Activated CD4-positive, alpha-beta memory T cell treated with anti-CD3 and anti-CD28 coated beads, Interleukin-2, amount 10 ng/mL, durations not matched to agents 7 days and 5 days (primary cell): ENCODE measurements at regions of chr10 and their contacts with region 1.

Region 1: GRCh38 chr10:104260775-104261115 is 6.1 kb downstream of the GSTO1 start:
- DNase-seq: no peak
- H3K4me3 Mint-ChIP-seq: peak overlapping the region; percentile 1
- H3K27ac Mint-ChIP-seq: peak overlapping the region; percentile 74
- H3K4me1 Mint-ChIP-seq: peaks cover 76% of the 10 kb centered on the region
- H3K27me3 Mint-ChIP-seq: no peaks in the 10 kb centered on the region

Region 2: GRCh38 chr10:104246976-104247375 is 13.8 kb before region 1 on chr10:
- CTCF ChIA-PET with region 1: no interaction called
- POLR2A ChIA-PET with region 1: interaction called, 11 read pairs
- DNase-seq: peak; percentile 32
- H3K4me3 Mint-ChIP-seq: peak overlapping the region; percentile 25
- H3K27ac Mint-ChIP-seq: peak overlapping the region; percentile 82
- H3K4me1 Mint-ChIP-seq: peaks cover 26% of the 10 kb centered on the region
- H3K27me3 Mint-ChIP-seq: peaks cover 29% of the 10 kb centered on the region

Region 3: GRCh38 chr10:104548090-104548489 is 287.3 kb after region 1 on chr10:
- CTCF ChIA-PET with region 1: no interaction called
- POLR2A ChIA-PET with region 1: no interaction called
- DNase-seq: no peak
- H3K4me3 Mint-ChIP-seq: no peak overlapping the region
- H3K27ac Mint-ChIP-seq: no peak overlapping the region
- H3K4me1 Mint-ChIP-seq: no peaks in the 10 kb centered on the region
- H3K27me3 Mint-ChIP-seq: peaks cover 3% of the 10 kb centered on the region